Testis (tissue), 5 donors: ENCODE measurements at regions of chr16 and their contacts with region 1.

Region 1: DNA sequence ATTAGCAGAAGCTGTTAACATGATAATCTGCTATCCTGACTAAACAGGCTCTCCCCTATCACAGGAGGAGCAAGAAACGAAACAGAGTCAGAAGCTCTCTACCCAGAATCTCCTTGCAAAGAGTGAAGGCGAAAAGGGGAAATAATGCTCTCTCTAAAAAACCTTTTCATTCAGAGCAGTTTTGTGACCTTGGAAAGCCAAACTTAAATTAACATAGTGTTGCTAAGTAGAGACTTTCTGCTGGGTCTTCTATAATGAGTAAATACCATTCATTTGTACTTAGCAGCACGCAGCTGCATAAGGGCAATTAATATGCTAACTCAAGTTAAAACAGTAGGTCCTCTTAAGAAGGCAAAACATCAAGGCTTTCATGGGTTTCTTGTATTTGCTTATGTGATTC is 101.7 kb upstream of the GPR139 start:
- DNase-seq: no peak
- H3K4me3 ChIP-seq: no peak overlapping the region
- H3K27ac ChIP-seq: no peak overlapping the region
- H3K4me1 ChIP-seq: no peaks in the 10 kb centered on the region
- H3K27me3 ChIP-seq: no peaks in the 10 kb centered on the region
- CTCF ChIP-seq: no peak
- POLR2A ChIP-seq: no peak

Region 2: GRCh38 chr16:20236579-20237289 is 61.4 kb after region 1 on chr16:
- intact Hi-C with region 1: loop called (anchors 10 kb)
- DNase-seq: no peak
- H3K4me3 ChIP-seq: no peak overlapping the region
- H3K27ac ChIP-seq: no peak overlapping the region
- H3K4me1 ChIP-seq: no peaks in the 10 kb centered on the region
- H3K27me3 ChIP-seq: no peaks in the 10 kb centered on the region
- CTCF ChIP-seq: no peak
- POLR2A ChIP-seq: no peak

Region 3: GRCh38 chr16:20372701-20373100 is 197.3 kb after region 1 on chr16:
- intact Hi-C with region 1: no loop called
- DNase-seq: no peak
- H3K4me3 ChIP-seq: no peak overlapping the region
- H3K27ac ChIP-seq: no peak overlapping the region
- H3K4me1 ChIP-seq: no peaks in the 10 kb centered on the region
- H3K27me3 ChIP-seq: no peaks in the 10 kb centered on the region
- CTCF ChIP-seq: no peak
- POLR2A ChIP-seq: no peak